Naive thymus-derived CD4-positive, alpha-beta T cell (primary cell): ENCODE measurements at regions of chr1 and their contacts with region 1.

Region 1: GRCh38 chr1:228131766-228132165 is 8.3 kb upstream of the GUK1 start:
- DNase-seq: peak in 1 of 9 donors; percentile 6
- ATAC-seq: no peak
- H3K4me3 ChIP-seq: no peak overlapping the region
- H3K4me3 Mint-ChIP-seq: no peak overlapping the region
- H3K27ac ChIP-seq: no peak overlapping the region
- H3K27ac Mint-ChIP-seq: no peak overlapping the region
- H3K4me1 ChIP-seq: peaks cover 0 to 11% of the 10 kb centered on the region in 2 donors
- H3K4me1 Mint-ChIP-seq: peaks cover 0 to 11% (median 7%) of the 10 kb centered on the region in 7 donors
- H3K27me3 ChIP-seq: no peaks in the 10 kb centered on the region
- H3K27me3 Mint-ChIP-seq: peaks cover 0 to 53% (median 9%) of the 10 kb centered on the region in 5 donors

Region 2: GRCh38 chr1:227999056-227999930 is 132.5 kb before region 1 on chr1:
- CTCF ChIA-PET with region 1: no interaction called
- POLR2A ChIA-PET with region 1: no interaction called
- intact Hi-C with region 1: loop called in 1 of 2 experiments (anchors 1 kb)
- DNase-seq: peak; percentile 42 to 74 (median 60)
- ATAC-seq: peak; percentile 93
- H3K4me3 ChIP-seq: no peak overlapping the region
- H3K4me3 Mint-ChIP-seq: no peak overlapping the region
- H3K27ac ChIP-seq: no peak overlapping the region
- H3K27ac Mint-ChIP-seq: no peak overlapping the region
- H3K4me1 ChIP-seq: no peaks in the 10 kb centered on the region
- H3K4me1 Mint-ChIP-seq: no peaks in the 10 kb centered on the region
- H3K27me3 ChIP-seq: peaks cover under 1 to 5% of the 10 kb centered on the region in 2 donors
- H3K27me3 Mint-ChIP-seq: peaks cover 9 to 44% (median 25%) of the 10 kb centered on the region in 5 donors

Region 3: GRCh38 chr1:228109073-228109961 is 22.4 kb before region 1 on chr1 and contains the start of gene MRPL55:
- CTCF ChIA-PET with region 1: interaction called, 4 read pairs
- POLR2A ChIA-PET with region 1: interaction called, 10 read pairs
- intact Hi-C with region 1: no loop called
- DNase-seq: peak; percentile 97 to 100 (median 99)
- ATAC-seq: peak; percentile 99
- H3K4me3 ChIP-seq: peak within 1 kb of the TSS; percentile 100
- H3K4me3 Mint-ChIP-seq: peak within 1 kb of the TSS; percentile 87 to 95 (median 93)
- H3K27ac ChIP-seq: peak within 1 kb of the TSS; percentile 94
- H3K27ac Mint-ChIP-seq: peak within 1 kb of the TSS; percentile 88 to 98 (median 95)
- H3K4me1 ChIP-seq: peaks cover 9 to 16% of the 10 kb centered on the region in 2 donors
- H3K4me1 Mint-ChIP-seq: peaks cover 5 to 37% (median 26%) of the 10 kb centered on the region in 7 donors
- H3K27me3 ChIP-seq: no peaks in the 10 kb centered on the region
- H3K27me3 Mint-ChIP-seq: peaks cover 0 to 3% (median 0%) of the 10 kb centered on the region in 5 donors
- total RNA-seq, gene MRPL55: 34.3 to 79.3 (median 65.2) TPM

Region 4: GRCh38 chr1:228180271-228180958 is 48.6 kb after region 1 on chr1:
- CTCF ChIA-PET with region 1: interaction called, 3 read pairs
- POLR2A ChIA-PET with region 1: no interaction called
- intact Hi-C with region 1: loop called in 1 of 2 experiments (anchors 1 kb)
- DNase-seq: no peak
- ATAC-seq: peak; percentile 55
- H3K4me3 ChIP-seq: no peak overlapping the region
- H3K4me3 Mint-ChIP-seq: no peak overlapping the region
- H3K27ac ChIP-seq: no peak overlapping the region
- H3K27ac Mint-ChIP-seq: peak overlapping the region in 1 of 9 donors; percentile 43
- H3K4me1 ChIP-seq: peaks cover 0 to 3% of the 10 kb centered on the region in 2 donors
- H3K4me1 Mint-ChIP-seq: peaks cover 0 to 10% (median 2%) of the 10 kb centered on the region in 7 donors
- H3K27me3 ChIP-seq: no peaks in the 10 kb centered on the region
- H3K27me3 Mint-ChIP-seq: no peaks in the 10 kb centered on the region

Region 5: GRCh38 chr1:228265167-228265566 is 133.4 kb after region 1 on chr1:
- CTCF ChIA-PET with region 1: no interaction called
- POLR2A ChIA-PET with region 1: no interaction called
- intact Hi-C with region 1: no loop called
- DNase-seq: peak in 1 of 9 donors; percentile 2
- ATAC-seq: no peak
- H3K4me3 ChIP-seq: no peak overlapping the region
- H3K4me3 Mint-ChIP-seq: no peak overlapping the region
- H3K27ac ChIP-seq: no peak overlapping the region
- H3K27ac Mint-ChIP-seq: no peak overlapping the region
- H3K4me1 ChIP-seq: no peaks in the 10 kb centered on the region
- H3K4me1 Mint-ChIP-seq: peaks cover 0 to 5% (median 0%) of the 10 kb centered on the region in 7 donors
- H3K27me3 ChIP-seq: no peaks in the 10 kb centered on the region
- H3K27me3 Mint-ChIP-seq: no peaks in the 10 kb centered on the region

Region 6: GRCh38 chr1:228378090-228378872 is 246.5 kb after region 1 on chr1:
- CTCF ChIA-PET with region 1: no interaction called
- POLR2A ChIA-PET with region 1: no interaction called
- intact Hi-C with region 1: loop called in 1 of 2 experiments (anchors 2 kb)
- DNase-seq: peak; percentile 37 to 75 (median 61)
- ATAC-seq: peak; percentile 58
- H3K4me3 ChIP-seq: peak overlapping the region; percentile 37
- H3K4me3 Mint-ChIP-seq: peak overlapping the region; percentile 80 to 90 (median 84)
- H3K27ac ChIP-seq: no peak overlapping the region
- H3K27ac Mint-ChIP-seq: peak overlapping the region in 4 of 9 donors; percentile 28 to 72 (median 51)
- H3K4me1 ChIP-seq: no peaks in the 10 kb centered on the region
- H3K4me1 Mint-ChIP-seq: peaks cover 6 to 18% (median 8%) of the 10 kb centered on the region in 7 donors
- H3K27me3 ChIP-seq: peaks cover 0 to 4% of the 10 kb centered on the region in 2 donors
- H3K27me3 Mint-ChIP-seq: peaks cover 0 to 42% (median 9%) of the 10 kb centered on the region in 5 donors

Region 7: GRCh38 chr1:228393248-228393699 is 261.5 kb after region 1 on chr1:
- CTCF ChIA-PET with region 1: no interaction called
- POLR2A ChIA-PET with region 1: no interaction called
- intact Hi-C with region 1: loop called in 1 of 2 experiments (anchors 1 kb)
- DNase-seq: no peak
- ATAC-seq: no peak
- H3K4me3 ChIP-seq: no peak overlapping the region
- H3K4me3 Mint-ChIP-seq: no peak overlapping the region
- H3K27ac ChIP-seq: no peak overlapping the region
- H3K27ac Mint-ChIP-seq: peak overlapping the region in 2 of 9 donors; percentile 43 to 62
- H3K4me1 ChIP-seq: peaks cover 0 to 5% of the 10 kb centered on the region in 2 donors
- H3K4me1 Mint-ChIP-seq: peaks cover 4 to 14% (median 10%) of the 10 kb centered on the region in 7 donors
- H3K27me3 ChIP-seq: no peaks in the 10 kb centered on the region
- H3K27me3 Mint-ChIP-seq: no peaks in the 10 kb centered on the region

Region 8: DNA sequence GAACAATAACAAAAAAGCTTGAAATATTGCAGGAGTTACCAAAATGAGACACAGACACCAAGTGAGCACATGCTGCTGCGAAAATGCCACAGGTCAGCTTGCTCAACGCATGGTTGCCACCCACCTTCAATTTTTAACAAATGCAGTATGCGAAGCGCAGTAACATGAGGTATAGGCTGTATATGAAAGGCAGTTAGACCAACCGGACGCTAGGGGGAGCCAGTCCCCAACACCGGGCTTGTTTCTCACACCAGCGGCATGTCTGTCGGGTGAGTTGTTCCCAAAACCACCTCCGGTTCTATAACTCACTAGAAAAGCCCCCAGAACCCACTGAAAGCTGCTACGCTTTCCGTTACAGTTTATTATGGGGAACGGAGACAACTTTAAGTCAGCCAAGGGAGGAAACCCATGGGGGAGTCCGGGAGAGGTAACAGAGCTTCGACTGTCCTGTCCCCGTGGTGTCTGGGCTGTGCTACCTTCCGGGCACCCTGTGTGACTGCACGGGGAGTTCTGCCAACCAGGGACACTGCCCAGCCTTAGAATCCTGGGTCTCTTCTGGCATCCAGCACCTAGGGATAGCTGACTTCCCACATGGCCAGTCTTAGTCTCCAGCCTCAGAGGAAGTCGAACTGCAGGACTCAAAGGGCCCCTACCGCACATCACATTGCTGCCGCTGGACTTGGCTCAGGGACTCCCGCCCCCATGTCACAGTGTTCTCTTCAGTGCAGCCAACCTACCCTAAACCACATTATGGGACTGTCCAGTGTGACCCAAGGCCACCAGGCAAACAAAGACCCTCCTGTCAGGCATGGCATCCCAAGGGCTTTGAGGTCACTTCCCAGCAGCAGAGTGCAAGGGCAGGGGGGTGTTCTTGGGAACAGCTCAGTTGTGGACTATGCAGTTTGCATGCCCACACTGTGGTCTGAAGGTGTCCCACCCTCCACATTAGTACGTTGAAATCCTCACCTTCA is 369.4 kb after region 1 on chr1:
- CTCF ChIA-PET with region 1: interaction called, 8 read pairs
- POLR2A ChIA-PET with region 1: no interaction called
- intact Hi-C with region 1: loop called in 1 of 2 experiments (anchors 5 kb)
- DNase-seq: peak; percentile 72 to 89 (median 85)
- ATAC-seq: peak; percentile 99
- H3K4me3 ChIP-seq: peak overlapping the region; percentile 44
- H3K4me3 Mint-ChIP-seq: peak overlapping the region; percentile 71 to 86 (median 80)
- H3K27ac ChIP-seq: no peak overlapping the region
- H3K27ac Mint-ChIP-seq: peak overlapping the region in 5 of 9 donors; percentile 19 to 72 (median 66)
- H3K4me1 ChIP-seq: peaks cover 9 to 14% of the 10 kb centered on the region in 2 donors
- H3K4me1 Mint-ChIP-seq: peaks cover 9 to 31% (median 18%) of the 10 kb centered on the region in 7 donors
- H3K27me3 ChIP-seq: no peaks in the 10 kb centered on the region
- H3K27me3 Mint-ChIP-seq: peaks cover 0 to 8% (median 0%) of the 10 kb centered on the region in 5 donors